ENCODE measurements at regions of chr19 and their contacts with region 1.

Region 1: GRCh38 chr19:44954824-44955586 is at the start of gene CLPTM1:
- DNase-seq: peak; percentile 96
- H3K4me3 ChIP-seq: peak within 1 kb of the TSS; percentile 87 to 95 (median 90)
- H3K27ac ChIP-seq: peak within 1 kb of the TSS; percentile 93
- H3K4me1 ChIP-seq: peaks cover 15% of the 10 kb centered on the region
- H3K27me3 ChIP-seq: no peaks in the 10 kb centered on the region
- CTCF ChIP-seq: no peak
- POLR2A ChIP-seq: peak; percentile 82
- total RNA-seq, gene CLPTM1: 108 and 115 TPM in 2 replicates

Region 2: GRCh38 chr19:44800461-44800860 is 154.5 kb before region 1 on chr19:
- CTCF ChIA-PET with region 1: no interaction called
- POLR2A ChIA-PET with region 1: no interaction called
- dilution Hi-C with region 1: no loop called
- intact Hi-C with region 1: loop called (anchors 10 kb)
- DNase-seq: peak; percentile 68
- H3K4me3 ChIP-seq: no peak overlapping the region
- H3K27ac ChIP-seq: no peak overlapping the region
- H3K4me1 ChIP-seq: peaks cover 14% of the 10 kb centered on the region
- H3K27me3 ChIP-seq: no peaks in the 10 kb centered on the region
- CTCF ChIP-seq: peak; percentile 91 to 98
- POLR2A ChIP-seq: no peak

Region 3: DNA sequence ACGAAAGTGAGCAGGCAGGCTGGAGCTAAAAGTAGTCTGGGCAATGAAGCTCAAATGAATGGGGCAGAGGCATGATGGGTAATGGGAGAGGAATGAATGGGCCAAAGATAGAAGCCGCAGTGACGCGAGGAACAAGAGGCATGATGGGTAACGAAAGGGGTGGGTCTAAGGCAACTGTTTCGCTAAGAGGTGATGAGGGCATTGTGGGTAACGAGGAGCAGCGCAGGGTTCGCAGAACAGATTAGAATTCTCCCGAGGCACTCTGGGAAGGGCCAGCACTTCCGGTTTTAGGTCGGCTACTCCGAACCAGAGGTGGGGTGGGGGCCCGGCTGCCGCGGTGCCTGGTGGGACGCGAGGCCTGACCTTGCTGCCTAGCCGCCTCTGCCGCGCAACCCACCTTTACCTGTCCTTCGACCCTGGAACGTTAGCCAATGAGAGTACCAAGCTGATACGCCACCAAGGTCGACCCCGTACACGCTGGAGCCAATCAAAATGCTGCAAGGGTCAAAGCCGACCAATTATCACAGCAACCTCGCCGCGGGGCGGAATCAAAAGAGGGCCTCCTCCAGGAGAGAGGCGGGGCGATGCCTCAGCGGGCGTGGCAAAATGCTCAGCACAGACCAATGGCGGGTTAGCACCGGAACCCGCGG is 64.5 kb before region 1 on chr19:
- CTCF ChIA-PET with region 1: interaction called, 4 read pairs
- POLR2A ChIA-PET with region 1: no interaction called
- dilution Hi-C with region 1: no loop called
- intact Hi-C with region 1: loop called (anchors 1 kb)
- DNase-seq: peak; percentile 100
- H3K4me3 ChIP-seq: peak overlapping the region in 2 of 3 experiments; percentile 44 to 61
- H3K27ac ChIP-seq: peak overlapping the region; percentile 65
- H3K4me1 ChIP-seq: peaks cover 16% of the 10 kb centered on the region
- H3K27me3 ChIP-seq: no peaks in the 10 kb centered on the region
- CTCF ChIP-seq: no peak
- POLR2A ChIP-seq: peak; percentile 91

Region 4: GRCh38 chr19:44903602-44904425 is 51.2 kb before region 1 on chr19:
- CTCF ChIA-PET with region 1: interaction called, 62 read pairs
- POLR2A ChIA-PET with region 1: no interaction called
- dilution Hi-C with region 1: no loop called
- intact Hi-C with region 1: loop called (anchors 1 kb)
- DNase-seq: peak; percentile 73
- H3K4me3 ChIP-seq: no peak overlapping the region
- H3K27ac ChIP-seq: no peak overlapping the region
- H3K4me1 ChIP-seq: peaks cover 5% of the 10 kb centered on the region
- H3K27me3 ChIP-seq: peaks cover 9 to 11% of the 10 kb centered on the region in 2 experiments
- CTCF ChIP-seq: peak; percentile 98 to 99
- POLR2A ChIP-seq: peak; percentile 7

Region 5: DNA sequence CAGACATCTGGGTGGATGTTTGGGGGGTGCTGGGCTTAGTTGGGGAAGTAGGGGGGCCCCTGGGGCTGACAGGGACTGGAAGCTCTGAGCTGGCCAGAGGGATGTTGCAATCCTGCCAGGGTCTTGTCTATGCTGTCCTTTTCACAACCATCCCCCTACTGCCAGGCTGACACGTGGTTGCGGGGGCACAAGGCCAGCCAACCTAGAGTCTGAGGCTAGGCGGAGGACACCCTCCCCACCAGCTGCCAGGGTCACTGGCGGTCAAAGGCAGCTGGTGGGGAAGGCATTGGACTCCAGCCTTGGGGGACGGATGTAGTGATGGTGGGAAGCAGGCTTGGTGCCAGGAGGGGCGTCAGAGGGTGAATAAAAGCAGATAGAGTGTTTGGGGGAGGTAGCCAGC is 42.2 kb before region 1 on chr19:
- CTCF ChIA-PET with region 1: interaction called, 18 read pairs
- POLR2A ChIA-PET with region 1: interaction called, 3 read pairs
- dilution Hi-C with region 1: no loop called
- intact Hi-C with region 1: no loop called
- DNase-seq: no peak
- H3K4me3 ChIP-seq: no peak overlapping the region
- H3K27ac ChIP-seq: no peak overlapping the region
- H3K4me1 ChIP-seq: peaks cover 10% of the 10 kb centered on the region
- H3K27me3 ChIP-seq: no peaks in the 10 kb centered on the region
- CTCF ChIP-seq: no peak
- POLR2A ChIP-seq: no peak

Region 6: GRCh38 chr19:44927746-44928145 is 27.3 kb before region 1 on chr19:
- CTCF ChIA-PET with region 1: interaction called, 3 read pairs
- POLR2A ChIA-PET with region 1: no interaction called
- dilution Hi-C with region 1: no loop called
- intact Hi-C with region 1: loop called (anchors 2 kb)
- DNase-seq: no peak
- H3K4me3 ChIP-seq: no peak overlapping the region
- H3K27ac ChIP-seq: no peak overlapping the region
- H3K4me1 ChIP-seq: peaks cover 3% of the 10 kb centered on the region
- H3K27me3 ChIP-seq: peaks cover 0 to 2% of the 10 kb centered on the region in 2 experiments
- CTCF ChIP-seq: no peak
- POLR2A ChIP-seq: no peak

Region 7: GRCh38 chr19:45032421-45032820 is 77.4 kb after region 1 on chr19:
- CTCF ChIA-PET with region 1: no interaction called
- POLR2A ChIA-PET with region 1: no interaction called
- dilution Hi-C with region 1: no loop called
- intact Hi-C with region 1: no loop called
- DNase-seq: no peak
- H3K4me3 ChIP-seq: no peak overlapping the region
- H3K27ac ChIP-seq: no peak overlapping the region
- H3K4me1 ChIP-seq: no peaks in the 10 kb centered on the region
- H3K27me3 ChIP-seq: no peaks in the 10 kb centered on the region
- CTCF ChIP-seq: no peak
- POLR2A ChIP-seq: no peak

Measured in endothelial cell of umbilical vein (primary cell).